B cell (primary cell): ENCODE measurements at regions of chr1 and their contacts with region 1.

Region 1: DNA sequence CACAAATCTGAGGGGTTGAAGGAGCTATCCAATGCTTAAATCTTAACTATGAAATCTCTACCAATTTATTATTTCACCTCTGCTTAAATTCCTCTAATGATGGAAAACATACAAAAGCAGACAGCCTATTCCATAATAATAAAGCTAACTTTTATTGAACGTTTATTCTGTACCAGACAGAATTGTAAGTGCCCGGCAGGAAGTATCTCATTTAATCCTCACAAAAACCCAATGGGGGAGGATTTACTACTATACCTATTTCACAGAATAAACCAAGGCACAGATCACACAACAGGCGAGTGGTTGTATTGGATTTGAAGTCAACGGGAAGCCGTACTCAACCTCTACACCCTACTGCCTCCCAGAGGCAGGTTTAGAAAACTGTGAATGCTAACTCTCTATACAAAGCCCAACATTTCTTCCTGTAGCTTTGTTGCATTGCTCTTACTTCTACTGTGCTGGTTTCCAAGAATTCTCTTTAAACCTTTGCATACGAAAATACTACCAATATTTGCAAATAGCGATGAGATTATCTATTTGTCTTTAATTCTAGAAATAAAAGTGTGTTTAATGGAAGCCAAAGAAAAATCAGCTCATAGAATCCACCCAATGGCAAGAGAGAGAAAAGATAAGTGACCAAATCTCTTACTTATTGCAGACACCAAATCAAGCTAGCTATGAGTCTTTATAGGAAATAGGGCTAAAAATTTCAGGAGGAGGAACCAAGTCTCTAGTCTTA is 33.5 kb upstream of the C1orf53 start:
- DNase-seq: peak; percentile 45
- ATAC-seq: peak; percentile 73
- H3K4me3 ChIP-seq: no peak overlapping the region
- H3K4me3 Mint-ChIP-seq: no peak overlapping the region
- H3K27ac ChIP-seq: no peak overlapping the region
- H3K27ac Mint-ChIP-seq: no peak overlapping the region
- H3K4me1 ChIP-seq: no peaks in the 10 kb centered on the region
- H3K4me1 Mint-ChIP-seq: peaks cover 3% of the 10 kb centered on the region
- H3K27me3 ChIP-seq: no peaks in the 10 kb centered on the region
- H3K27me3 Mint-ChIP-seq: peaks cover 3% of the 10 kb centered on the region
- CTCF ChIP-seq: peak; percentile 81

Region 2: DNA sequence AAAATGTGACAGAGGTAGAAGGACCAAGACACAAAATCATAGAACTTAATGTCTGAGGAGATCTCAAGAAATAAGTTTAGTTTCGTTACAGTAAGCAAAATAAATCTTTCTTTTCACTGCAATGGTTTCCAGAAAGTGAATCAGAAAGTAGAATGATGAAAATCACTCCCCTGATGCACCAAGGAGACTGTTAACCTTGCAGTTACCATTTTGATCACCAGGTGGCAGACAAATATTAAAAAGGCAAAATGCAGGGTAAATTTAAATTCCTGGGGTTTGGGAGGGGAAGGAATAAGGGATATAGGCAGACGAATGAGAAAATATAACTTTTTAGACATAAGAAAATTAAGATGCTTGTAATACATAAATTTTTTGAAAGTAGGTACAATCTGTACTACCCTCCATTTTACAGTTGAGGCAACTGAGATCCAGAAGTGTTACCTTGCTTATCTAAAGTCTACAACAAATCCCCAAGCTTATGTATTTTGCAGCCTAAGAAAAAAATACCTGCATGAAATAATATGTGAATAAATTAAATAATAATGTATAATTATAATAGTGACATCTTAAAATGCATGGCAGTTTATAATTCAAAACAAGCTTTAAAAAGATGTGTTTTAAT is 347.7 kb before region 1 on chr1:
- CTCF ChIA-PET with region 1: interaction called, 31 read pairs
- POLR2A ChIA-PET with region 1: no interaction called
- intact Hi-C with region 1: loop called (anchors 1 kb)
- DNase-seq: peak; percentile 54
- ATAC-seq: peak; percentile 49
- H3K4me3 ChIP-seq: no peak overlapping the region
- H3K4me3 Mint-ChIP-seq: no peak overlapping the region
- H3K27ac ChIP-seq: no peak overlapping the region
- H3K27ac Mint-ChIP-seq: no peak overlapping the region
- H3K4me1 ChIP-seq: no peaks in the 10 kb centered on the region
- H3K4me1 Mint-ChIP-seq: no peaks in the 10 kb centered on the region
- H3K27me3 ChIP-seq: no peaks in the 10 kb centered on the region
- H3K27me3 Mint-ChIP-seq: no peaks in the 10 kb centered on the region
- CTCF ChIP-seq: peak; percentile 84

Region 3: DNA sequence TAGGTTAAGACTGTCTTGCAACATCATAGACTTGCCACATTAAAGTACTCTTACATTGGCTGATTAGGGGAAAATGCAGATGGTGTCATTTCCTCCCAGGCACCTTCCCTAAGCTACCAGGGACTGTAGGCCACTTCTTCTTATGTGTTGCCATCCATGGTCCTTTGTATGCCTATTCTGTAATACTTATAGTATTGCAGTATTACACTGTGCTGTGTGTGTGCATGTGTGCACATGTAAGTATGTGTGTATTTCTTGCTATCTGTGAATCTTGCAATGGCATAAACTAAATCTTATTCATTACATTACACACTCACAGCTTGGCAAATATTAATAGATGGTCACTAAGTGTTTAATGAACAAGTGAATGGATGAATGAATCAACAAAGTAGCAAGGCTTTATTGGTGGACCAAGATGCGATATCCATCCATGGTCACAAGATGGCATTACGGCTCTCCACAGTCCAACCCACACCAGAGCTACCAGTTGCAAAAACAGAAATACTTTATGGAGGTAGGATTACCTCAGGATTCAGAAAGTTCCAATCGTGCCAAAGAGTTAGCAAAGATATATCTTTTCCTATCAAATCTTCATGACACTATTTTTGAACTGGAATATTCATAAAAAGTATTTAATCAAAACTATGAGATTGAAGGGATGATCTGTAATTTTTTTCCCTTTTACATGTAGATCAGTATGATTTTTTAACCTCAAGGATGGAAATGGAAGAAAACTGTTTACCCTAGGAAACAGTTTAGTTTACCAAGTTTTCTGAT is 253.8 kb before region 1 on chr1:
- CTCF ChIA-PET with region 1: interaction called, 171 read pairs
- POLR2A ChIA-PET with region 1: no interaction called
- intact Hi-C with region 1: loop called (anchors 1 kb)
- DNase-seq: peak; percentile 42
- ATAC-seq: peak; percentile 49
- H3K4me3 ChIP-seq: no peak overlapping the region
- H3K4me3 Mint-ChIP-seq: no peak overlapping the region
- H3K27ac ChIP-seq: no peak overlapping the region
- H3K27ac Mint-ChIP-seq: no peak overlapping the region
- H3K4me1 ChIP-seq: no peaks in the 10 kb centered on the region
- H3K4me1 Mint-ChIP-seq: no peaks in the 10 kb centered on the region
- H3K27me3 ChIP-seq: no peaks in the 10 kb centered on the region
- H3K27me3 Mint-ChIP-seq: no peaks in the 10 kb centered on the region
- CTCF ChIP-seq: peak; percentile 70

Region 4: GRCh38 chr1:197692965-197693364 is 176.0 kb before region 1 on chr1:
- CTCF ChIA-PET with region 1: interaction called, 40 read pairs
- POLR2A ChIA-PET with region 1: no interaction called
- intact Hi-C with region 1: loop called (anchors 5 kb)
- DNase-seq: peak; percentile 13
- ATAC-seq: no peak
- H3K4me3 ChIP-seq: no peak overlapping the region
- H3K4me3 Mint-ChIP-seq: no peak overlapping the region
- H3K27ac ChIP-seq: no peak overlapping the region
- H3K27ac Mint-ChIP-seq: no peak overlapping the region
- H3K4me1 ChIP-seq: peaks cover 0 to 3% of the 10 kb centered on the region in 2 donors
- H3K4me1 Mint-ChIP-seq: peaks cover 28% of the 10 kb centered on the region
- H3K27me3 ChIP-seq: no peaks in the 10 kb centered on the region
- H3K27me3 Mint-ChIP-seq: no peaks in the 10 kb centered on the region
- CTCF ChIP-seq: no peak

Region 5: DNA sequence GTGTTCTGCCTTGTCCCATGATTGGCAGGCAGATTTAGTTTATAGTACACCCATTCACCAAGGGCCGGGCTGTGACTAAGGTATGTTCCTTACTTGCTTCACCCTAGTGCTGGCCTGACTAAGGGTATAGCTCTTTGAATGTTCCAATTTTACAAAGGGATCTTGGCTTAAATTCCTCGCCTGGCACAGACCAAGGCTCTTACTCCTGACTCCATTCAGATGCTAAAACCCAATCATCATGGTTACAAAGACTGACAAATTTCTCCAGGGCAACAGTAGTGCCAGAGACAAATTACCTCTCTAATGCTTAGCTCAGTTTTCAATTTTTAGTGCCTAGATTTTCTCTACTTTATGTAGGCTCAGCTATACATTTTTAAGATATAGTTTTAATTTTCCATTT is 22.0 kb after region 1 on chr1:
- CTCF ChIA-PET with region 1: interaction called, 10 read pairs
- POLR2A ChIA-PET with region 1: no interaction called
- intact Hi-C with region 1: no loop called
- DNase-seq: no peak
- ATAC-seq: no peak
- H3K4me3 ChIP-seq: no peak overlapping the region
- H3K4me3 Mint-ChIP-seq: no peak overlapping the region
- H3K27ac ChIP-seq: no peak overlapping the region
- H3K27ac Mint-ChIP-seq: no peak overlapping the region
- H3K4me1 ChIP-seq: no peaks in the 10 kb centered on the region
- H3K4me1 Mint-ChIP-seq: no peaks in the 10 kb centered on the region
- H3K27me3 ChIP-seq: peaks cover 0 to 24% (median 9%) of the 10 kb centered on the region in 4 experiments
- H3K27me3 Mint-ChIP-seq: peaks cover 45% of the 10 kb centered on the region
- CTCF ChIP-seq: no peak

Region 6: DNA sequence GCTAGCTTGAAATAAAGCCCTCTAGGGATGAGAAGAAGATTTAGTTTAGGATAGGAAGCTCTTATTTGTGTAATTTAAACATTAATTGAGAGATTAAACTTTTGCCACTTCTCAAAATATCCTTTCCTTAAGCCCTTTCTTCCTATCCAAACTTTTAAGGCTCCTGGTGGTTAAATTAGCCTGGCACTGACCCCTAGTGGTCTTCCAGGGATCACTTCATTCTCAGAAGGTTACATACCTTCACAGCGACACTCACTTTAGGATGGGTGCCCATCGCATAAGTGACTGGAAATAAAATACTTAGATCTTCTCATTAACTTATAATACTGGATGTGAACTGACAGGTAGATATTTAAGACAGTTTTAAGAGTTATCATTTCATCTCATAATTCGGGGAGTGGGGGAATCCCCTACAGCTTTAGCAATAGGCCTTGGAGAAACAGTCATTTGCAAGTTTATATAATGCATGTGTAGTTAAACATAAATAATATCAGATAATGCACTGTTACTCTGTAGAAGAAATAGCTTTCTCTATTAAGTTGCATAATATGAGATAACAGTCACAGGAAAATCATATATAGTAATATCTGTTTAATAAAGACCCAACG is 55.7 kb after region 1 on chr1:
- CTCF ChIA-PET with region 1: interaction called, 8 read pairs
- POLR2A ChIA-PET with region 1: no interaction called
- intact Hi-C with region 1: loop called (anchors 5 kb)
- DNase-seq: peak; percentile 66
- ATAC-seq: peak; percentile 70
- H3K4me3 ChIP-seq: no peak overlapping the region
- H3K4me3 Mint-ChIP-seq: no peak overlapping the region
- H3K27ac ChIP-seq: no peak overlapping the region
- H3K27ac Mint-ChIP-seq: no peak overlapping the region
- H3K4me1 ChIP-seq: peaks cover 23% of the 10 kb centered on the region in 2 donors
- H3K4me1 Mint-ChIP-seq: peaks cover 15% of the 10 kb centered on the region
- H3K27me3 ChIP-seq: peaks cover 0 to 60% (median 51%) of the 10 kb centered on the region in 4 experiments
- H3K27me3 Mint-ChIP-seq: peaks cover 79% of the 10 kb centered on the region
- CTCF ChIP-seq: peak; percentile 83